MCF 10A (cell line): ENCODE measurements at regions of chr12 and their contacts with region 1.

Region 1: DNA sequence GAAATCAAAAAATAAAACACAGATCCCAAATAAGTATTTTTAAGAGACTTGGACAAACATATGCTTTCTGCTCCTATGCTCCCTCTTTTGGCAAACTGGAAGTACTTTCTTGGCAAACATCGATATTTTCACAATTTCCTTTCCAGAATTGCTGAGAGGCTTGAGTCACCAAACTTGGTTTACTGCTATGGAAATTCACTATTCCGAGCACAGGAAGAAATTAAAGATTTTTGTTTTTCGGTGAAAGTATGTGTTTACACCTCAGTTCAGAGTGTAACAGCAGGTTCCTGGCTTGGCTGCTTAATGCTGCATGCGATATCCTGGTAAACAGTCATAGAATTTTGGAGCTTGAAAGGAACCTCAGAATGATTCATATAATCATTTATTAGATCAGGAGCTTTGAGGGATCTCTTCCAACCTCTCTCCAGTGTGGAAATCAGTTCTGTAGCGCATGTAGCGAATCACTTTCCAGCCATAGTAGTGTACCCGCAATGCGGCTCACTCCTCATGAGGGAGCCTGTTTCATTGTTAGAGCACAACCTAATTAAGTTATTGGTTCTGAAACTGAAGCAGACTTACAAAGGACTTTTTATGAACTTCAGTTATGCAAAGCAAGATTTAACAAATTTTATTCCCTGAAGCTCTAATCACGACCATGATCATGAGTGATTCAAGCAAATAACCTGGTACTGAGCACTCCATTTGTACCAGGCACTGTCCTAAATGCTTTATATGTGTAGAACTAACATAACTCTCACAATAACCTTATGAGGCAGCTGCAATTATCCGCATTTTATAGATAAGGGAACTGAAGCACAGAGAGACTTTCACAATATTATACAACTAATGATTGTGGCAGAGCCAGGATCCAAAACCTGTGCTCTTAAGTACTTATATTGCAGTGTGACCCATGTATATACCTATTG is 56.4 kb upstream of the ATP2A2 start:
- DNase-seq: peak; percentile 85
- H3K4me3 Mint-ChIP-seq: peak overlapping the region; percentile 66
- H3K27ac Mint-ChIP-seq: peak overlapping the region; percentile 91
- H3K4me1 Mint-ChIP-seq: peaks cover 15% of the 10 kb centered on the region
- H3K27me3 Mint-ChIP-seq: no peaks in the 10 kb centered on the region
- CTCF ChIP-seq: peak; percentile 42

Region 2: DNA sequence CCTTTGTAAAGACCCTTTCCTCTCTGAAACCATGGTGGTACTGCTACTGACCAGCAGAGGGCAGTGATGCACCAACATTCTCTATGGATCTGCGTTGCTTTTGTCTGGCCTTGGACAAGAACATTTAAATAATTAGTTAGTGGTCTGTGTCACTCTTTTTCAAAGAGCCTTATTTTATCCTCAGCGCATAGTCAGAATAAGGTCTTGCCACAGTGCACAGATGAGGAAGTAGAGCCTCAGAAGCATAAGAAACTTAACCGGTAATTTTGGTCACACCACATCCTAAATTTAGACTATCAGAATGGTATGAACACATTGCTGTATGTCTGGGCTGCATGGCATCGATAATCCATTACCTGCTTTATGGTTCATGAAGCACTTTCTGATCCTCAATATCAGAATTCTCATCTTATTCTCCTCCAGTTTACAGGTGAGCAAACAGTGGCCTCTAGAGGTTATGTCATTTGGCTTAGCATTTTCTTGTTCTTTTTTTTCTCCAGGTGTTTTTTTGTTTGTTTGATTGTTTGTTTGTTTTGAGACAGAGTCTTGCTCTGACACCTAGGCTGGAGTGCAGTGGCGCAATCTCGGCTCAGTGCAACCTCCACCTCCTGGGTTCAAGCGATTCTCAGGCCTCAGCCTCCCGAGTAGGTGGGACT is 124.2 kb before region 1 on chr12:
- CTCF ChIA-PET with region 1: interaction called, 6 read pairs
- POLR2A ChIA-PET with region 1: no interaction called
- intact Hi-C with region 1: loop called (anchors 1 kb)
- DNase-seq: peak; percentile 78
- H3K4me3 Mint-ChIP-seq: no peak overlapping the region
- H3K27ac Mint-ChIP-seq: no peak overlapping the region
- H3K4me1 Mint-ChIP-seq: peaks cover 7% of the 10 kb centered on the region
- H3K27me3 Mint-ChIP-seq: no peaks in the 10 kb centered on the region
- CTCF ChIP-seq: peak; percentile 85

Region 3: GRCh38 chr12:110270125-110270962 is 45.7 kb after region 1 on chr12:
- CTCF ChIA-PET with region 1: interaction called, 4 read pairs
- POLR2A ChIA-PET with region 1: interaction called, 15 read pairs
- intact Hi-C with region 1: loop called (anchors 2 kb)
- DNase-seq: peak; percentile 86
- H3K4me3 Mint-ChIP-seq: peak overlapping the region; percentile 60
- H3K27ac Mint-ChIP-seq: peak overlapping the region; percentile 68
- H3K4me1 Mint-ChIP-seq: peaks cover 30% of the 10 kb centered on the region
- H3K27me3 Mint-ChIP-seq: no peaks in the 10 kb centered on the region
- CTCF ChIP-seq: no peak

Region 4: GRCh38 chr12:110289044-110289710 is 64.5 kb after region 1 on chr12:
- CTCF ChIA-PET with region 1: interaction called, 5 read pairs
- POLR2A ChIA-PET with region 1: interaction called, 13 read pairs
- intact Hi-C with region 1: no loop called
- DNase-seq: no peak
- H3K4me3 Mint-ChIP-seq: no peak overlapping the region
- H3K27ac Mint-ChIP-seq: peak overlapping the region; percentile 62
- H3K4me1 Mint-ChIP-seq: peaks cover 24% of the 10 kb centered on the region
- H3K27me3 Mint-ChIP-seq: no peaks in the 10 kb centered on the region
- CTCF ChIP-seq: no peak

Region 5: DNA sequence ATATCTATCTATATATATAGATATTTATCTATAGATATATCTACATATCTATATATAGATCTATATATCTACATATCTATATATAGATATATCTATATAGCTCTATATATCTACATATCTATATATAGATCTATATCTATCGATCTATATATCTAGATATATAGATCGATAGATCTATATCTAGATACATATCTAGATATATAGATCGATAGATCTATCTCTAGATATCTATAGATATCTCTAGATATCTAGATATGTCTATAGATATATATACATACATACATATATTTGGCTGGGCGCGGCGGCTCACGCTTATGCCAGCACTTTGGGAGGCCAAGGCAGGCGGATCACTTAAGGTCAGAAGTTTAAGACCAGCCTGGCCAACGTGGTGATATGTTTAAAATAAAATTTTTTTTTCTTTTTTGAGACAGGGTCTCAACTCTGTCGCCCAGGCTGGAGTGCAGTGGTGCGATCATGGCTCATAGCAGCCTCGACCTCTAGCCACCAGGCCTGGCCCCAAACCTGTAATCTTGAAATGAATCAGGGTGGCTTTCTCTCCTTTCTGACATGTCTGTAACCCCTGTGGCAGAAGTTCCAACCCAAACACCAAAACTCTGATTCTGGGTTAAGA is 207.4 kb after region 1 on chr12:
- CTCF ChIA-PET with region 1: interaction called, 3 read pairs
- POLR2A ChIA-PET with region 1: no interaction called
- intact Hi-C with region 1: loop called (anchors 1 kb)
- DNase-seq: no peak
- H3K4me3 Mint-ChIP-seq: peak overlapping the region; percentile 97
- H3K27ac Mint-ChIP-seq: peak overlapping the region; percentile 93
- H3K4me1 Mint-ChIP-seq: peaks cover 5% of the 10 kb centered on the region
- H3K27me3 Mint-ChIP-seq: no peaks in the 10 kb centered on the region
- CTCF ChIP-seq: no peak